Activated CD4-positive, alpha-beta T cell treated with anti-CD3 and anti-CD28 coated beads, Interleukin-2, amount 10 ng/mL, durations not matched to agents 24 days and 14 days (primary cell): ENCODE measurements at regions of chr1 and their contacts with region 1.

Region 1: GRCh38 chr1:156565519-156565918 is 6.8 kb downstream of the IQGAP3 start:
- DNase-seq: no peak
- H3K4me3 Mint-ChIP-seq: no peak overlapping the region
- H3K27ac Mint-ChIP-seq: no peak overlapping the region
- H3K4me1 Mint-ChIP-seq: no peaks in the 10 kb centered on the region
- H3K27me3 Mint-ChIP-seq: no peaks in the 10 kb centered on the region

Region 2: DNA sequence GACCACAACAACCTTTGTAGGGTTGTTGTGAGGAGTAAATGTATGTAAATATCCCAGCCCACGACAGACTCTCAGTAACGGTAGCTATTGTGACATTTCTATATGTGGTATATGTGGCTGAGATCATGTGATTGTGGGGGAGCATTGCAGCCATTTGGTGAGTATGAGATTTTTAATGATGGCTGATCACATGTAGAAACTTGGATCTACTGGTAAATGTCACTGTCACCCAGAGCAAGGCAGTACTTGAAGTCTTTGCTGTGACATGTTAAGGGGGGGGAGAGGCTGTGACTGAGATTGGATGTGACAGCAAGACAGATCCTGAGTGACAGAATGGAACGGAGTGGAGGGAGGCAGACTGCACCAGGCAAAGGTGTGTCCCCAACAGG is 41.0 kb before region 1 on chr1:
- intact Hi-C with region 1: loop called (anchors 5 kb)
- DNase-seq: peak; percentile 66
- H3K4me3 Mint-ChIP-seq: peak overlapping the region; percentile 40
- H3K27ac Mint-ChIP-seq: peak overlapping the region; percentile 66
- H3K4me1 Mint-ChIP-seq: peaks cover 29% of the 10 kb centered on the region
- H3K27me3 Mint-ChIP-seq: peaks cover 5% of the 10 kb centered on the region